Activated B cell treated with CpG ODN at 0.5 μM for 24 hours (primary cell): ENCODE measurements at regions of chr5 and their contacts with region 1.

Region 1: DNA sequence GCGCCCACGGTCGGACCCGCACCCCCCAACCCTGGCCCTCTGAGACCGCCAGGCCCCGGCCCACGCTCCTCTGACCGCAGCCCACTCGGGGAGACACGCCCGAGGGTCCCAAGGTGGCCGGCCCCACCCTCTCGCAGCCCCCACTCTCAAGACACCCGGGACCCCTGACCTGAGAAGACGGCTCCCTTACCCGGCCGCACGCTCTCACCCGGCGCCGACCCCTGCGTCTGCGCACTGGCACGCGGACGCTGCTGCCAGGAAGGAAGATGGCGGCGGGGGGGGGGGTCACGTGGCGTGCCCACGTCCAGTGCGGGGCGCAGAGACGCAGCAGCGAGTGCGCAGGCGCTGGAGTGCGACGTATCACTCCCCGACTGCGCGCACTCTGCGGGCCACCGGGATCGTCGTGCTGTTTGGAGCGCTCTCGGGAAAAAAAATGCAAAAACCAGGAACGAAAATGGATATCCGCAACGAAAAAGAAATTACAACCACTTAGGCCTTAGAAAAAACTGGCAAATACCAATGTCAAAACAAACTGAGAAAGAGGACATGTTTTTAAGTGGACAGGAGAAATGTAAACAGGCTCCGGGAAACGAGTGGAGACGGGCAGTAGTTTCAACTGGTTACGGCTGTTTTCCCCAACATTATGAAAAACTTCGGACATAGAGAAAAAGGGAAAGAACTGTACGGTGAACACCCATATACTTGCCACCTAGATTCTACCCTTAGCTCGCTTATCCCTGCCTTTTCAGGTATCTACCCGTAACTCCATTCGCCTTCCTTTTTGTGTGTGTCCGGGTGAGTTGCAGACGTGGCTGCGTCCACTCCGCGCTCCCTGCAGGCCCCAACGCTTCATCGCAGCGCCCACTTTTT is at the start of gene MRPL36:
- DNase-seq: peak; percentile 81
- ATAC-seq: peak; percentile 73
- H3K4me3 Mint-ChIP-seq: peak within 1 kb of the TSS; percentile 98
- H3K27ac Mint-ChIP-seq: peak within 1 kb of the TSS; percentile 97
- H3K4me1 Mint-ChIP-seq: peaks cover 46% of the 10 kb centered on the region
- H3K27me3 Mint-ChIP-seq: no peaks in the 10 kb centered on the region
- CTCF ChIP-seq: no peak
- total RNA-seq, gene MRPL36: 28.7 and 32.8 TPM in 2 replicates

Region 2: GRCh38 chr5:1652596-1653345 is 147.1 kb before region 1 on chr5:
- CTCF ChIA-PET with region 1: no interaction called
- POLR2A ChIA-PET with region 1: interaction called, 3 read pairs
- intact Hi-C with region 1: loop called (anchors 5 kb)
- DNase-seq: no peak
- ATAC-seq: no peak
- H3K4me3 Mint-ChIP-seq: peak overlapping the region; percentile 66
- H3K27ac Mint-ChIP-seq: no peak overlapping the region
- H3K4me1 Mint-ChIP-seq: peaks cover 32% of the 10 kb centered on the region
- H3K27me3 Mint-ChIP-seq: peaks cover 22% of the 10 kb centered on the region
- CTCF ChIP-seq: no peak

Region 3: DNA sequence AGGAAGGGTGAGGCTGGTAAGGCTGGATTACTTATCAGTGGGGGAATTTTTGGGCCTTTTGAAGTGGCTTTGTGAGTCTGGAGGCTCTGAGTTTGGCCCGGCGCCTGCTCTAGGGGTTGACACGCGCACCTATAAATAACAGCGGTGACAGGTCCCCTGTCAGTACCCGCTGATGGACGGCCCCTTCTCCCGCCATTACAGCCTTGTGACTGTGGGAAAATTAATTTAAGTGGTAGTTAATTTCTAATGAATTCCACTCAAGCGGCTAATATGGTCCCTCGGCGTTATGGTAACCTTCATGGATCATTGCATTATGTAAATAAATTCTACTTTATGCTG is 16.7 kb before region 1 on chr5:
- CTCF ChIA-PET with region 1: no interaction called
- POLR2A ChIA-PET with region 1: no interaction called
- intact Hi-C with region 1: loop called (anchors 1 kb)
- DNase-seq: no peak
- ATAC-seq: peak; percentile 62
- H3K4me3 Mint-ChIP-seq: peak overlapping the region; percentile 33
- H3K27ac Mint-ChIP-seq: peak overlapping the region; percentile 13
- H3K4me1 Mint-ChIP-seq: peaks cover 23% of the 10 kb centered on the region
- H3K27me3 Mint-ChIP-seq: peaks cover 20% of the 10 kb centered on the region
- CTCF ChIP-seq: no peak